Endothelial cell of umbilical vein (primary cell): ENCODE measurements at regions of chr14 and their contacts with region 1.

Region 1: DNA sequence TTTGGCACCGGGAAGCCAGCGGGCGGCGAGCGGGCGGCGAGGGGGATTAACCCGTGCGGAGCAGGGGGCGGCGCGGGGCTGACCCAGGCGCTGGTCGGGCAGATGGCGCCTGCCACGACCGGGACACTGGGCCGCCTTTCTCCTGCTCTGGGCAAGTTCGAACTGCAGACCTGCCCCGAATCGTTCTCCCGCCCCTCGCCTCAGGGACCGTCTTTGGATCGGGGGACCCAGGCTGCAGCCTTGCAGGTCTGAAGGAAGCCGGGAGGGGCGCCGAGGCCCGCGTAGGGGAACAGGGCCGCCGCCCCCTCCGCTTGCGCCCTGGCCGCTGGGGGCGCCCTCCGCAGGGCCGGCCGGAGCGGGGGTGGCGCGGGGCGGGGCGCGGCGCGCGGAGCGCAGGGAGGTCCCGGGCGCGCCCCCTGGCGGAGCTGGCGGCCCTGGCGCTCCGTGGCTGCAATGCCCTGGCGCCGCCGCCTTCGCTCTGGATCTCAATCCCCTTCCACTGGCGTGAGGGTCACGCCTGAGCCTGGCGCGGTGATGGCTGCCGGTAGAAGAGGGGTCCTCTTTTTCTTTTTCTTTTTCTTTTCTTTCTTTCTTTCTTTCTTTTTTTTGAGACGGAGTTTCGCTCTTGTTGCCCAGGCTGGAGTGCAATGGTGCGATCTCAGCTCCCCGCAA is 449 bp upstream of the LTBP2 start:
- DNase-seq: peak; percentile 77
- H3K4me3 ChIP-seq: peak overlapping the region; percentile 81 to 88 (median 88)
- H3K27ac ChIP-seq: peak overlapping the region; percentile 52
- H3K4me1 ChIP-seq: peaks cover 65% of the 10 kb centered on the region
- H3K27me3 ChIP-seq: no peaks in the 10 kb centered on the region
- CTCF ChIP-seq: peak in 1 of 2 donors; percentile 74
- POLR2A ChIP-seq: peak; percentile 48

Region 2: GRCh38 chr14:74501135-74501614 is 111.3 kb before region 1 on chr14:
- CTCF ChIA-PET with region 1: interaction called, 3 read pairs
- POLR2A ChIA-PET with region 1: no interaction called
- dilution Hi-C with region 1: no loop called
- intact Hi-C with region 1: loop called (anchors 1 kb)
- DNase-seq: peak; percentile 62
- H3K4me3 ChIP-seq: no peak overlapping the region
- H3K27ac ChIP-seq: no peak overlapping the region
- H3K4me1 ChIP-seq: no peaks in the 10 kb centered on the region
- H3K27me3 ChIP-seq: no peaks in the 10 kb centered on the region
- CTCF ChIP-seq: peak; percentile 60 to 74
- POLR2A ChIP-seq: no peak

Region 3: DNA sequence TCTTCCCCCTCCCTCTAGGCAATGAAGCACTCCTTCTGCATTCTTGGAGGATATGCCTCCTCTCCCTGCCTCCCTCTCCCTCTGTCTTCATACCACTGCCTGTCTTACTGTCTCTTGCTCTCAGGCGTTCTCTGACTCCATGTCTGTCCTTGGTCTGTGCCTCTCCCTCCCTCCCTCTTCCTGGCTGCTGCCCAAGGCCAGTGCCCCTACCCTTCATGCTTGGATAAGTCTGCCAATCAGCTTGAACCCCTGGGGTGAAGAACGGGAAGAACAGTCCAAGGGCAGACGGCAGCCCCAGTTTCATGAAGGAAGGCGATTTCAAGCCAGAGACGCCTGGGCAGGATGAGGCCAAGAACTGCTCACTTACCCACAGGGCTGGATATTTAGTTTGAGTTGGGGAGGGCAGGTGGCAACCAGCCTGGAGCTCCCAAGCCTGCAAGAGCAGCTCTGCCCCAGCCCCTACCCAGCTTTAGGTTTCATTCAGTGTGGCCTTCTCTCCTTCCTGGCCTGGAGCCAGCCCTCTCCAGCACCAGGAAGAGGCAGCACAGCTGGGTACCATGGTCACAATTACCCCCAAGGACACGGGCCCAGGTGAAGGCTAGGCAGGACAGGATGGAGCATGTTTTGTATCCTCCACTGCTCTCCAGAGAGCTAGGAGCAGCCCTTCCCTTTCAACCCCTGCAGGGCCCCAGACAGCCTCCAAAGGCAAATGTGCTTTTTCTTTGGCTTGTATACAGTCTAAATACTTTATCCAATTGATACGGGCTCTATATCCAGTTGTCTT is 35.4 kb after region 1 on chr14:
- CTCF ChIA-PET with region 1: interaction called, 33 read pairs
- POLR2A ChIA-PET with region 1: interaction called, 4 read pairs
- dilution Hi-C with region 1: no loop called
- intact Hi-C with region 1: no loop called
- DNase-seq: peak; percentile 29
- H3K4me3 ChIP-seq: no peak overlapping the region
- H3K27ac ChIP-seq: no peak overlapping the region
- H3K4me1 ChIP-seq: peaks cover 29% of the 10 kb centered on the region
- H3K27me3 ChIP-seq: no peaks in the 10 kb centered on the region
- CTCF ChIP-seq: no peak
- POLR2A ChIP-seq: no peak

Region 4: GRCh38 chr14:74684434-74684833 is 71.9 kb after region 1 on chr14:
- CTCF ChIA-PET with region 1: interaction called, 10 read pairs
- POLR2A ChIA-PET with region 1: no interaction called
- dilution Hi-C with region 1: no loop called
- intact Hi-C with region 1: no loop called
- DNase-seq: no peak
- H3K4me3 ChIP-seq: no peak overlapping the region
- H3K27ac ChIP-seq: no peak overlapping the region
- H3K4me1 ChIP-seq: peaks cover 6% of the 10 kb centered on the region
- H3K27me3 ChIP-seq: no peaks in the 10 kb centered on the region
- CTCF ChIP-seq: no peak
- POLR2A ChIP-seq: no peak

Region 5: GRCh38 chr14:74732387-74732786 is 119.9 kb after region 1 on chr14:
- CTCF ChIA-PET with region 1: interaction called, 10 read pairs
- POLR2A ChIA-PET with region 1: no interaction called
- dilution Hi-C with region 1: no loop called
- intact Hi-C with region 1: no loop called
- DNase-seq: no peak
- H3K4me3 ChIP-seq: no peak overlapping the region
- H3K27ac ChIP-seq: no peak overlapping the region
- H3K4me1 ChIP-seq: no peaks in the 10 kb centered on the region
- H3K27me3 ChIP-seq: no peaks in the 10 kb centered on the region
- CTCF ChIP-seq: no peak
- POLR2A ChIP-seq: no peak

Region 6: GRCh38 chr14:74804219-74804826 is 191.8 kb after region 1 on chr14:
- CTCF ChIA-PET with region 1: interaction called, 202 read pairs
- POLR2A ChIA-PET with region 1: no interaction called
- dilution Hi-C with region 1: no loop called
- intact Hi-C with region 1: loop called (anchors 1 kb)
- DNase-seq: peak; percentile 76
- H3K4me3 ChIP-seq: no peak overlapping the region
- H3K27ac ChIP-seq: no peak overlapping the region
- H3K4me1 ChIP-seq: no peaks in the 10 kb centered on the region
- H3K27me3 ChIP-seq: no peaks in the 10 kb centered on the region
- CTCF ChIP-seq: peak; percentile 66 to 68
- POLR2A ChIP-seq: no peak

Region 7: GRCh38 chr14:74881431-74882361 is 269.2 kb after region 1 on chr14 and contains the start of gene DLST:
- CTCF ChIA-PET with region 1: interaction called, 6 read pairs
- POLR2A ChIA-PET with region 1: interaction called, 4 read pairs
- dilution Hi-C with region 1: no loop called
- intact Hi-C with region 1: loop called (anchors 1 kb)
- DNase-seq: peak; percentile 87
- H3K4me3 ChIP-seq: peak within 1 kb of the TSS; percentile 49 to 95 (median 93)
- H3K27ac ChIP-seq: peak within 1 kb of the TSS; percentile 74
- H3K4me1 ChIP-seq: peaks cover 24% of the 10 kb centered on the region
- H3K27me3 ChIP-seq: no peaks in the 10 kb centered on the region
- CTCF ChIP-seq: no peak
- POLR2A ChIP-seq: peak; percentile 96
- total RNA-seq, gene DLST: 105 and 110 TPM in 2 replicates

Region 8: DNA sequence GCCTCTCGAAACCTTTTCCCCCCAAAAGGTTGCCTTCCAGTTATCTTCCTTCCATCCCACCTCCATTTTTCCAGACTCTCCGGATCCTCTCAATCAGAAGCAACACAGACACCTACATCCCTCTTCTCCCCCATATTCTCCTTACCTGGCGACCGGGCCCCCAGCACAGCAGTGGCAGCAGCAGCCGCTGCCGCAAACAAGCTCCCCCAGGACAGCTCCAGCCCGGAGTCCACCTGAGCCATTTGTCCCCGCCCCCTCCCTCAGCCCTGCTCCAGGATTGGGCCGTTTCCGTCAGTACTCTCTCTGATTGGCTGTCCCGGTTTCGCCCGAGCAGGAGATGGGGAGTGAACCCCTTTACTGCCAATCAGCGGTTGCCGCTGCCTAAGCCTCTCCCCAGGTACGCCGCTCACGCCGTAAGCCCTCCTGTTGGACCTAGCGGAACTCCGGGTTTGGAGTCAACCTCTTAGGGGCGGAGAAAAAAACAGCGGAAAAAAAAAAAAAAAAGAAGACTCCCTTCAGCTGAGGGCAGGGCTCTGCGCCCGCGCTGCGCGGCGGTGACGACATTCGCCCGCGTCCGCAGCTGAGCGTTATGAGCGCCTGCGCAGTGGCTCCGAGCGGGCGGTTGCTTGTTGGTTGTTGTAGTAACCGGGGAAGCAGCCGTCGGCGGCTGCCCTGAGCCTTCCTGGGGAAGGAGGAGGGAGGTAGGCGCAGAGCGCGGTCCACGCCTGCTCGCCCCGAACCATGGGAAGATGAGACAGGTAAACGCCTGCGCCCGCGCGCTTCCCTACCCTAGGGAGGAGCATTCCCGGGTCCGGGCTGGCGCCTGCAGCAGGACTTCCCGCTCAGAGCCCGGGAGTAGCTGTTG is 1048.4 kb after region 1 on chr14 and contains the starts of genes ERG28 and TTLL5:
- CTCF ChIA-PET with region 1: no interaction called
- POLR2A ChIA-PET with region 1: no interaction called
- dilution Hi-C with region 1: no loop called
- intact Hi-C with region 1: no loop called
- DNase-seq: peak; percentile 98
- H3K4me3 ChIP-seq: peak within 1 kb of the TSS; percentile 84 to 99 (median 97)
- H3K27ac ChIP-seq: peak within 1 kb of the TSS; percentile 71
- H3K4me1 ChIP-seq: peaks cover 36% of the 10 kb centered on the region
- H3K27me3 ChIP-seq: no peaks in the 10 kb centered on the region
- CTCF ChIP-seq: no peak
- POLR2A ChIP-seq: no peak
- total RNA-seq, gene ERG28: 31.4 and 31.9 TPM in 2 replicates
- total RNA-seq, gene TTLL5: 70.0 and 93.6 TPM in 2 replicates